ENCODE measurements at regions of chr12 and their contacts with region 1.

Region 1: DNA sequence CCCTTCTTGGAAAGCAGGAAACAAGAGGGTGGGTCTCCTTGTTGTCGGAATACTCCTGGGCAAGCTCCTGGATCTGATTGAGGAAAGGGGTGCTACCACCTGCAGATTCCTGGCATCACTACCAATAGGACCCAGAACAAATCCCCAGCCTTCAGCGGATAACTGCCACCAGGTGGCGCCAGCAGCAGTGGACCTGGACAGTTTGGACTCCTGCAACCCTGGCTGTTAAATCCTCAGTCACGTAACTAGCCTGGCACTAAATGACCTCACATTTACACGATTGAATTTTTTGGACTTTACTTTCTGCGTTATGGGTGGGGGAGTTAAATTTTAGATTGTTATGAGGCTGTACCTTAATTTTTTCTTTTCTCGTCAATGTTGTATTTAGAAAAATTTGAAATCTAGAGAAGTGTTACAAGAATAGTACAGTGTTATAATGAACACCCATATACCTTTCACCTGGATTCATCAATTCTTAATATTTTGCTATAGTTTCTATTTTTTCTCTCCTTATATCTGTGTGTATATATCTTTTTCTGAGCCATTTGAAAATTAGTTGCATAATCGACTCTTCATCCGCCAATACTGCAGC is 95.6 kb downstream of the GAS2L3 start:
- DNase-seq: peak; percentile 66
- ATAC-seq: peak; percentile 88
- H3K4me3 ChIP-seq: no peak overlapping the region
- H3K27ac ChIP-seq: no peak overlapping the region
- H3K4me1 ChIP-seq: peaks cover 11% of the 10 kb centered on the region; the same call in 1 of the 2 replicates
- H3K27me3 ChIP-seq: peaks cover 1 to 4% of the 10 kb centered on the region in 2 experiments; a peak in 3 of 5 replicates
- CTCF ChIP-seq: peak; percentile 86
- EP300 ChIP-seq: no peak
- POLR2A ChIP-seq: no peak
- RAD21 ChIP-seq: peak; percentile 47; the same call in 1 of the 2 replicates

Region 2: GRCh38 chr12:100741084-100741711 is 72.2 kb after region 1 on chr12:
- CTCF ChIA-PET with region 1: interaction called, 6 read pairs
- POLR2A ChIA-PET with region 1: no interaction called
- in situ Hi-C with region 1: no loop called
- intact Hi-C with region 1: loop called (anchors 2 kb)
- DNase-seq: peak; percentile 10
- ATAC-seq: no peak; the same call in 2 of the 3 replicates
- H3K4me3 ChIP-seq: no peak overlapping the region
- H3K27ac ChIP-seq: no peak overlapping the region
- H3K4me1 ChIP-seq: no peaks in the 10 kb centered on the region
- H3K27me3 ChIP-seq: no peaks in the 10 kb centered on the region
- CTCF ChIP-seq: peak; percentile 57
- EP300 ChIP-seq: no peak
- POLR2A ChIP-seq: no peak
- RAD21 ChIP-seq: no peak

Region 3: DNA sequence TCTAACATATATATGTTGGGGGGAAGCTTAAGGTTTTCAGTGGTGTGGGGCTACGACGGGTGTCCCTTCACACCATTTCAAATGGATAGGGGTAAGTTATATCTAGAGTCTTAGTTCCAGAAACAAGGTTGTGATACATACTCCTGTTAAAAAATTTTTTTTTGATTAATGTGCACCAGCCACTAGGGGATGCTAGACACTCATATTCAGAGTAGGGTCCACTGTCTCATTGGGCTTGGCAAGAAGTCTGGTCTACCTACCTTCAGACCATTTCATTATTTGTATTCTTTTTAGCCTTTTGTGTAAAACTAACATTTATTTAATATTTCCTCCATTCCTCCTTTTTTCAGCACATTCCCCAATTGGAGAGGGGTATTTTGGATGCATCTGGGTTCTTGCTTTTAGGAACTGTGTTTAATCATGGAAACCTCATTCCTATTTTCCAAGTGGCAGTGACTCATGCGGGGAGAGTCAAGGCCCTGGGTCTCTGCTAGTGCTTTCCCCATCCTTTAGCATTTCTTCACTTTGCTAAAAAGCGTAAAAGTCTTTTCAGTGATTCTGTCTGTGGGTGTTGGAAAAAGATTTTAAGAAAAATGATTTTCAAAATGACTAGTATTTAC is 159.0 kb after region 1 on chr12:
- CTCF ChIA-PET with region 1: no interaction called
- POLR2A ChIA-PET with region 1: no interaction called
- in situ Hi-C with region 1: no loop called
- intact Hi-C with region 1: no loop called
- DNase-seq: peak; percentile 13
- ATAC-seq: peak; percentile 76
- H3K4me3 ChIP-seq: no peak overlapping the region
- H3K27ac ChIP-seq: no peak overlapping the region
- H3K4me1 ChIP-seq: no peaks in the 10 kb centered on the region
- H3K27me3 ChIP-seq: no peaks in the 10 kb centered on the region
- CTCF ChIP-seq: peak; percentile 64
- EP300 ChIP-seq: no peak
- POLR2A ChIP-seq: no peak
- RAD21 ChIP-seq: no peak